Activated CD8-positive, alpha-beta T cell treated with anti-CD3 and anti-CD28 coated beads for 36 hours (primary cell): ENCODE measurements at regions of chr10 and their contacts with region 1.

Region 1: DNA sequence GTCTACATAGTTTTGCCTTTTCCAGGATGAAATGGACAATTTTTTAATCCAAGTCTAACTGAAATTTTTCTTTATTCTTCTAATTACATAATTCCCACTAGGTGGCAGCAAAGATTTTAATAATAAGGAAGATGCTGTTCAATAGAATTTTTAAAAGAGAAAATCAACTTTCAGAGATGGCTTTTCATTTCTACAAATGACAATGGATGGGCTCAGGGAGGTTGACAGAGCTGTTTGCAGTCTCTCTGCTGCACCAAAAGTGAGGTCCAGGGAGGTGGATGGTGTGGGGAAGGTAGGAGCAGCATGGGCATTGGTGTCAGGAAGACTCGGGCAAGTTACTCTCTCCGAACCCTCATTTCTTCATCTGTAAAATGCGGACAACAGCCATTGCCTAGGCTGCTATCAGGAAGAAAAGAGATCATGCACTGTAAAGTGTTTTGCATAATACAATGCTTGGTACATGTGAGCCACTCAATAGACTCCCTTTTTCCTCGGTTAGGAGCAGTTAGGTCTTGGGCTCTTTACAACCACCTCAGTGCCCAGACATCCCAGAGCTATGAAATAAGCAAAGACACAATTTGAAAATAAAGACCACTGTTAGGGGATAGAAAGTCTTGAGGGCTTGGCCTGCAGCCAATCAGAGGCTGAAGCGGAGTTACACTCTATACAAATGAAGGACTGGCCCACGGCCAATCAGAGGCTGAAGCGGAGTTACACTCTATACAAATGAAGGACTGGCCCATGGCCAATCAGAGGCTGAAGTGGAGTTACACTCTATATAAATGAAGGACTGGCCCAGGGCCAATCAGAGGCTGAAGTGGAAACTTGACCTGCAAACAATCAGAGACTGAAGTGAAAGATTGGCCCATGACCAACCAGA is 107.1 kb downstream of the ABLIM1 start:
- DNase-seq: no peak
- ATAC-seq: no peak
- H3K4me3 Mint-ChIP-seq: no peak overlapping the region
- H3K27ac Mint-ChIP-seq: no peak overlapping the region
- H3K4me1 Mint-ChIP-seq: peaks cover 18% of the 10 kb centered on the region
- H3K27me3 Mint-ChIP-seq: no peaks in the 10 kb centered on the region
- CTCF ChIP-seq: peak; percentile 78

Region 2: DNA sequence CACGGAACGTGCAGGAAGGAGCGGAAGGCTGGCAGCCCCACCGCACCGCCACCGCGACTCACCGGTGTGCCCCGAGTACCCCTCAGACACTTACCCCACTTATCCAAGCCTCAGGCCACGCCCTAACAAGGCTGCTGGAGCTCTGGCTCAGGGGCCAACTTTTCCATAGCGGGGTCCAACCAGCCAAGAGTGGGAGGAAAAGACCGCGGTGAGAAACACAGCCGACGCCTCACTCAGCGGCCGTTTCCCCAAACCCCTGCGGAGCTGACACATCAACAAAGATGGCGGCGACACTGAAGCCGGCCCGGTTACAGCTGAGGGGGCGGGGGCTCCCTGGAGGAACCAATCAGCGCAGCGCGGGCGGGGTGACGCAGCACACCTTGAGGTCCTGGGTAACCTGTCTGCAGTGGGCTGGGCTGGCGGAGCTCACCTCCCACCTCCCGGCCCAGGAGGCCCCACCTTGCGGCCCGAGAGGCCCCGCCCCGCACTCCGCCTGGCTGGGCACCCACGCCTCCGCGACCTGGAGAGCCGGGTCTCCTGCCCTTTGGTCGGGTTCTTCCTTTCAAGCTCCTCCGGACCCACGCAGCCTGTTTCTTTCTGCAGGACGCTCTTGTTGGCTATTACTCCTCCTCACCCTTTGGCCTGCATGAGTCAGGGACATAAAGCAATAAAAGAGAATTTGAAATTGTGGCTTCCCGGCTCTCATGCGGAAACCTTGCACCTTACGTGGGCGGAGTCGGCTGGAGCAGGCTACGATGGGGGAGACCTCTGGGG is 376.9 kb before region 1 on chr10 and contains the start of gene CCDC186:
- CTCF ChIA-PET with region 1: no interaction called
- POLR2A ChIA-PET with region 1: no interaction called
- intact Hi-C with region 1: loop called (anchors 10 kb)
- DNase-seq: peak; percentile 99
- ATAC-seq: peak; percentile 99
- H3K4me3 Mint-ChIP-seq: peak within 1 kb of the TSS; percentile 98
- H3K27ac Mint-ChIP-seq: peak within 1 kb of the TSS; percentile 98
- H3K4me1 Mint-ChIP-seq: peaks cover 36% of the 10 kb centered on the region
- H3K27me3 Mint-ChIP-seq: peaks cover 3% of the 10 kb centered on the region
- CTCF ChIP-seq: no peak
- total RNA-seq, gene CCDC186: 10.5 to 11.6 TPM

Region 3: DNA sequence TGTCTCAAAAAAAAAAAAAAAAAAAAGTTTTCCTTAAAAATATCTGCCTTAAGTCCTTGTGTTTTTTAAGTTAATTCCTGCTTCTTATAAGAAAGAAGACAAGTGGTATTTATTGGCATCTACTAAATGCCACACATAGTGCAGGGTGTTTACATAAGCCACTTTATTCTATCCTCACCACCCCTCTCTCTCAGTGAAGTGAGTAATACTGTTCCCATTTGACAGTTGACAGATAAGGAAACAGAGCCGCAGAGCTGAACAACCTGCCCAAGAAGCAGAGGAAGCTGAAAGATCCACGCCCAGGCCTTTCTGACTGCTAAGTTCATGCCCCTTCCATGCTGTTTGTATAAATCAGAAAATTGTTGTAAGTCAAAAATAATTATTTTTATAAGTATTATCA is 53.0 kb after region 1 on chr10:
- CTCF ChIA-PET with region 1: no interaction called
- POLR2A ChIA-PET with region 1: no interaction called
- intact Hi-C with region 1: no loop called
- DNase-seq: no peak
- ATAC-seq: no peak
- H3K4me3 Mint-ChIP-seq: no peak overlapping the region
- H3K27ac Mint-ChIP-seq: no peak overlapping the region
- H3K4me1 Mint-ChIP-seq: peaks cover 5% of the 10 kb centered on the region
- H3K27me3 Mint-ChIP-seq: peaks cover 2% of the 10 kb centered on the region
- CTCF ChIP-seq: no peak

Region 4: GRCh38 chr10:114694752-114695151 is 143.8 kb after region 1 on chr10:
- CTCF ChIA-PET with region 1: interaction called, 19 read pairs
- POLR2A ChIA-PET with region 1: no interaction called
- intact Hi-C with region 1: loop called (anchors 5 kb)
- DNase-seq: peak; percentile 50
- ATAC-seq: peak; percentile 49
- H3K4me3 Mint-ChIP-seq: no peak overlapping the region
- H3K27ac Mint-ChIP-seq: no peak overlapping the region
- H3K4me1 Mint-ChIP-seq: peaks cover 9% of the 10 kb centered on the region
- H3K27me3 Mint-ChIP-seq: peaks cover 2% of the 10 kb centered on the region
- CTCF ChIP-seq: peak; percentile 75

Region 5: GRCh38 chr10:114703377-114704107 is 152.5 kb after region 1 on chr10:
- CTCF ChIA-PET with region 1: interaction called, 33 read pairs
- POLR2A ChIA-PET with region 1: no interaction called
- intact Hi-C with region 1: no loop called
- DNase-seq: peak; percentile 13
- ATAC-seq: peak; percentile 58
- H3K4me3 Mint-ChIP-seq: no peak overlapping the region
- H3K27ac Mint-ChIP-seq: no peak overlapping the region
- H3K4me1 Mint-ChIP-seq: no peaks in the 10 kb centered on the region
- H3K27me3 Mint-ChIP-seq: peaks cover 2% of the 10 kb centered on the region
- CTCF ChIP-seq: peak; percentile 65

Region 6: DNA sequence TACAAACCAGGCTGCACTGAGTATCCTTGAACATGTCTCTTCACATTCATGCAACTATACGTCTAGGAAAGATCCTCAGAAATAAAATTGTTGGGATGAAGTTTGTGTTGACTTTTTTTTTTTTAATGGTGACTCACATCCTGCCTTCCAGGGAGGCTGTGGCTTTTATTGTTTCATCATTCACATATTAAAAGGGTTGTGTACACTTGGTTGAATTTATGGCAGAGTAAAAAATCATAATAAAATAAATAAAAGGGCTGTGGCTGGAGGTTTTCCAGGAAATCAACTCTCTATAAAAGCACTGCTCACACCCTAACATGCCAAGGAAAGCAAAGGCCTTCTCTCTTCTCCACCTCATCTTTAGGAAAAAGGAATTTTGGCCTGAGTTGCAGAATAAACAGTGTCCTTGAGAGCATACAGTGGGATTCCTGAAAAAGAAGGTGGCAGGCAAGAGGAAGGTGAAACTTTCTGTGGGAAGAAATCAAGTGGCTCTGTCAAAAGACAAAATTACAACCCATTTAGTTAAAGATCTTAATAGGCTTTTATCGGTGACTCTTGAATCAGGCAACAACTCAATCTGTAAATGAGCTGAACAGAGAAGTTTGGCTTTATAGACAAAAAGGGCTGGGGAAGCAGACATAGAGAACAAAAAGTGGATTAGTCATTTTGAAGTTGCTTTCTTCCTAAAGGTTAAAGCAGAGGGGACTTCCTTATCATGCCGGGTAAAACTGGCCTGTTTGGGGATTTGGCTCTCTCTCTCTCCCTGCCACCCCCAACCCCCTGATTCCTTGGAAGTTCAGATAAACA is 229.0 kb after region 1 on chr10:
- CTCF ChIA-PET with region 1: interaction called, 21 read pairs
- POLR2A ChIA-PET with region 1: no interaction called
- intact Hi-C with region 1: loop called (anchors 5 kb)
- DNase-seq: no peak
- ATAC-seq: no peak
- H3K4me3 Mint-ChIP-seq: no peak overlapping the region
- H3K27ac Mint-ChIP-seq: peak overlapping the region; percentile 12
- H3K4me1 Mint-ChIP-seq: peaks cover 5% of the 10 kb centered on the region
- H3K27me3 Mint-ChIP-seq: peaks cover 2% of the 10 kb centered on the region
- CTCF ChIP-seq: no peak

Region 7: DNA sequence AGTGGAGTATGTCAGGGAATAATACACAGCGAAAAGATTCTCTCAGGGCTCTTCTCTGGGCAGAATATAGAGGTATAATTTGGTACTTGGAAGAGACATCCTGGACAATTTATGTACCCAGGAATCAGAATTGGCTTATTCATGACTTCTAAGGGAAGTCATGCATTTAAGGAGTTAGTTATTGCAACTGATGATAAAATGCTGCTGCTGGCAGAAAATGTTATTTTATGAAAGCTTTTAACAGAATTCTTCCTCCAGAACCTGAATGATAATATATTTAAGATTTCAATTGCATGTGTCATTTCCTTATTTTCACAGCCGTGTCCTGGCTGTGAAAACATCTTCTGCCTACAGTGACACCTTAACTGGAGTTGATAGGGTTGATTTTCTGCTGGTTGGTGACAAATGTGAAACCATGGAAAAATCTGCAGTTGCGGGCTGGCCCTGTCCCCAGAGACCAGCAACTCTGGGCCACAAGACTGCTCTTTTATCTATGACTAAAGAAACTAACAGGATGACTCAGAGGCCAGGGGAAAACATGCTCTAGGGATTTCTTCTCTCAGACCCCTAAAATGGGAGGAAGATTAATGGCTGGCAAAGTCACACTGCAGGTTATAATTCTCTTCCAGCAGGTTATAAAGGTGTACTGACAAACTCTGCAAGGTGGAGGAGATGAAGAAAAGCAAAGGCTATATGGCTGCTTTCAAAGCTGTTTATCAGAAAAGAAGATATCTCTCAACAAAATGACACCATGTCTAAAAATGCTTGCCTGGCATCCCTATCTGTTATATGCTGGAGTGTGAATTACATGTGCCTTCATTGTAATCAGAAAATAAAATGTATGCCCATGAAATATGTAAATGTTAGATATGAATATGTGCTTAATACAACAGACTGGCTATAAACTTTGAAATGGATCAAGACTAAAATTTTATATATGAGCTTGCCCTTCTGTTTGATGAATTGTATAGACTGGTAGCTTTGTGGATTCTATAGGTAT is 374.9 kb after region 1 on chr10:
- CTCF ChIA-PET with region 1: no interaction called
- POLR2A ChIA-PET with region 1: no interaction called
- intact Hi-C with region 1: loop called (anchors 10 kb)
- DNase-seq: peak; percentile 69
- ATAC-seq: peak; percentile 91
- H3K4me3 Mint-ChIP-seq: no peak overlapping the region
- H3K27ac Mint-ChIP-seq: no peak overlapping the region
- H3K4me1 Mint-ChIP-seq: peaks cover 17% of the 10 kb centered on the region
- H3K27me3 Mint-ChIP-seq: peaks cover 30% of the 10 kb centered on the region
- CTCF ChIP-seq: no peak